HEK293 (cell line): ENCODE measurements at regions of chr1 and their contacts with region 1.

Region 1: DNA sequence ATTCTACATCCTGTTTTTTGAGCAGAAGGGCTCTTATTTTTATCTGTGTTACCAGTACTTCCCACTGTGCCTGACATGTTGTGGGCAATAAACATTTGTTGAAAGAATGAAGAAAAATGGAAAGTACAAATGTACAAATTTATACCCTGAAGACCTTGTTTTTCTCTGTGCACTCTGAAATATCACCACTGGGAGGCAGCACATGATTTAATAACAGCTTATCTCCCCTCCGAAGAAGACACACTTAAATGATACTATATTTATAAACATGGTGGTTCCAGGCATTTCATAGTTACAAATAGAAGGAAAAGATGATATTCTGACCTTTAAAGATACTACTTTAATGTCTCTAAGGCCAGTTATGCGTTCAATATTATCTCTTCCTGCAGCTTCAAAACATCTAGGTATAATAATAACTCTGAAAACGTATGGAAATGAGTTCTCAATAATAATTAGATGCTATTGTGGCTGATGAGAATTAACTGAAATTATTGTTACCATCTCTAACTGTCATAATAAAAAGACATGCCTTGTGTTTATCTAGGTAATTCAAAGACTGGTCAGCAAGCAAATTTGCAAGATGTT is 12.8 kb downstream of the DYNLT5 start:
- H3K4me3 ChIP-seq: no peak overlapping the region
- H3K27ac ChIP-seq: no peak overlapping the region
- H3K4me1 ChIP-seq: no peaks in the 10 kb centered on the region
- CTCF ChIP-seq: no peak

Region 2: DNA sequence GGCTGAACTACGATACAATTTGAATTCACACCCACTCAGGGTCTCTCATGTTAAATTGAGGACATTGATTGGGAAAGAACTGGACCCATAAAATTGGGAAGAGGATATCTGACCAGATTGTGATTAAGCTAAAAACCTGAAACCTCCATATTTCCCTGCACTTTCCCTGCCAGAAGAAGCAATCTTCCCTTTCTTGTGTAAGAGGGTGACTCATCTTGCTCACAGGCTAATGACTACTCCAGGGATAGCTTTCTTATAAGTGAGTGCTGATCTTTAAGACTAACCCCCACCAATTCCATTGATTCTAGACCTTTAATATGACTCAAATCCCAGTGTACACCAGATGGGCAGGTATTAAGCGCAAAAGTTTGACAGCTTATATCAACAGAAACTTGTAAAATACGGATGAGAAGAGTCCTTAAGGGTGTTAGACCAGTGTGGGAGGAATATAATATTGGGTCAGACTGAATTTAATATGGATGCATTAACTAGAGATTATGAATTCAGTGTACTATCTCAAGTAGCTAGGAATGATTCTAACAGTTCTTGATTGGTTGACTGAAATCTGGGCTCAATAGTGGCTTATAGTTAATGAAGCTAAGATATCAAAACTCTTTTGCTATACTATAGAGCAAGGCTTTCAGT is 243.2 kb before region 1 on chr1:
- CTCF ChIA-PET with region 1: no interaction called
- POLR2A ChIA-PET with region 1: no interaction called
- H3K4me3 ChIP-seq: no peak overlapping the region
- H3K27ac ChIP-seq: no peak overlapping the region
- H3K4me1 ChIP-seq: no peaks in the 10 kb centered on the region; the same call in 1 of the 2 replicates
- CTCF ChIP-seq: no peak

Region 3: DNA sequence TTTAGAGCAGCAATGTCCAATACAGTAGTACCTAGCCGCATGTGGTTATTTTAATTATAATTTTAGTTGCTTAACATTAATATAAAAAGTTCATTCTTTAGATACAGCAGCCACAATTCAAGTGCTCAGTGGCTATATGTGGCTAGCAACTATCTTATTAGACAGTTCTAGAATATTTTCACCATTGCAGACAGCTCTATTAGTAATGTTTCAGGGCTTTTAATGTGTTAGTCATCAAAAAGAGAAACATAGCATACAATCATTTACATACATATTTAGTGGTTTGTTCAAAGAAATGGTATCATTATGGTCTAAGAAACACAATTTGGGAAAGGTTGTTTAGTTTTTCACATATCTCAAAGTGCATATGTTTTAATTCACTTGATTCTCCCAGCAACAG is 79.4 kb before region 1 on chr1:
- CTCF ChIA-PET with region 1: no interaction called
- POLR2A ChIA-PET with region 1: no interaction called
- H3K4me3 ChIP-seq: no peak overlapping the region
- H3K27ac ChIP-seq: no peak overlapping the region
- H3K4me1 ChIP-seq: no peaks in the 10 kb centered on the region
- CTCF ChIP-seq: no peak

Region 4: DNA sequence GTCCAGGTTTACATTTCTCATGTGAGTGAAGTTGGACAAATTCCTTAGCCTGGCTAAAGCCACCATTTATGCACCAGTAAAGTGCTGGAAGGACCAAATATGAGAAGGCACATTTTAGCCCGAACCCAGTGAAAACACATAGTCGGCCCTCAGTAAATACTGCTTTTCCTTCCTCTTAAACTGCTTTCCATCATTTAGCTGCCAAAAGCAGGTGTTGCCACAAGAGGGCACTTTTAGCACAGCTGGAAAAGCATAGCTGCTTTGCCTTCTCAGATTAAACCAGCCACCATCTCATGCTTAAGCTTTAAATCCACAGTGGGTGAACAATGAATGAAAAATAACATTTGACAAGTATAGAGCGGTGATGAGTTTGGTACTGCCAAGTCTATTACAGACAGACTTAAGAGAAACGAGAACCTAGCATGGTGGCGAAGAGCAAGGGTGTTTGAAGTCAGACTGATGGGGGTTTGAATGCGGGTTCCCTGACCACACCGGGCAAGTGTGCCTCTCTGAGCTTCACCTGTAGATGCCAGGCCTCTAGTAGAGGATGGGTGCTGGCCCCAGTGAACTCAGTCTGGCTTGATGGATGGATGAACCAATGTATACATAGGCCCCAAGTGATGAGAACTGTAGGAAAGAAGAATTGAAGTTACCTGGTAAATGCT is 231.1 kb after region 1 on chr1:
- CTCF ChIA-PET with region 1: interaction called, 10 read pairs
- POLR2A ChIA-PET with region 1: no interaction called
- H3K4me3 ChIP-seq: no peak overlapping the region
- H3K27ac ChIP-seq: no peak overlapping the region
- H3K4me1 ChIP-seq: no peaks in the 10 kb centered on the region
- CTCF ChIP-seq: peak; percentile 65; the same call in 1 of the 2 replicates